CD8-positive, alpha-beta memory T cell (primary cell): ENCODE measurements at regions of chr2 and their contacts with region 1.

Region 1: DNA sequence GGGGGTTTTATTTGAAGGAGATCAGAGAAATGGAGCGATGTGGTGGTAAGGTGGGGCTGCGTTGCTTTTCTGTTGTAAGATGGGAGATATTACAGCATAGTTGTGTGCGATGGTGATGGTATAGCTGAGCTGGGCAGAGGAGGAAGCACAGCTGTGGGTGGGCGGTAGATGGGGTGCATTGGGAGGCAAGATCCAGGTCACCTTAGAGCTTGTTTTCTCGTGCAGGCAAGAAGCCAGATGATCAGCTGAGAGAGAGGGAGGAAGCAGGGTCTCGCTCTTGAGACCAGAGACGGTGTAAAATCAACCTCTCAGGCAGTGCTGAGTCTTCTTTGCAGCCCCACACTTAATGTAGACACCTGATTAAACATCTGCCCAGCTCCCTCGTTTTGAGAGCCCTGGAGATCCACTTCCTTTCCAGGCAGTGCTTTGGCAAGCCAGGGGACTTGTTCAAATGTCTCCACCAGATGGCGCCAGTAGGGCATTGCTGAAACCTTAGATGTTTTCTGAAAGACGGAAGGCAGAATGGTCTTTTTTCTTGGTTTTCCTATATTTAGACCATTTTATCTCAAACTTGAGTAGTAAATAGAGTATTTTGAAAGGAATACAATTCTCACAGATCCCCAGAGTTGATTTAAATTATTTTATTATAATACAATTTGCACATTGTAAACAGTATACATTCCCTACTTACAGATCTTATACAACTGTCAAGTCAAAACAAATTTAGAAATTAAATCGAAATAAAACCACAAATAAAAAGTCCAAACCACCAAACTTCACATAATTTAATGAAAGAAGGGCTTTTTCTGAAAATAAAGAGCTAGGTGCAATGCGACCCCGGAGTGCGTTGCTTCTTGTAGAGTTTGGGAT is 21.1 kb upstream of the LYPD6B start:
- DNase-seq: peak; percentile 45 to 74 (median 59)
- H3K4me3 ChIP-seq: no peak overlapping the region
- H3K4me3 Mint-ChIP-seq: no peak overlapping the region
- H3K27ac ChIP-seq: no peak overlapping the region
- H3K27ac Mint-ChIP-seq: peak overlapping the region in 3 of 8 donors; percentile 35 to 52 (median 50)
- H3K4me1 ChIP-seq: no peaks in the 10 kb centered on the region
- H3K4me1 Mint-ChIP-seq: peaks cover 7 to 11% (median 8%) of the 10 kb centered on the region in 3 donors
- H3K27me3 ChIP-seq: no peaks in the 10 kb centered on the region
- H3K27me3 Mint-ChIP-seq: no peaks in the 10 kb centered on the region

Region 2: GRCh38 chr2:149006883-149007540 is 10.3 kb before region 1 on chr2:
- CTCF ChIA-PET with region 1: interaction called, 20 read pairs
- POLR2A ChIA-PET with region 1: no interaction called
- DNase-seq: no peak
- H3K4me3 ChIP-seq: no peak overlapping the region
- H3K4me3 Mint-ChIP-seq: no peak overlapping the region
- H3K27ac ChIP-seq: no peak overlapping the region
- H3K27ac Mint-ChIP-seq: no peak overlapping the region
- H3K4me1 ChIP-seq: no peaks in the 10 kb centered on the region
- H3K4me1 Mint-ChIP-seq: no peaks in the 10 kb centered on the region
- H3K27me3 ChIP-seq: no peaks in the 10 kb centered on the region
- H3K27me3 Mint-ChIP-seq: no peaks in the 10 kb centered on the region

Region 3: DNA sequence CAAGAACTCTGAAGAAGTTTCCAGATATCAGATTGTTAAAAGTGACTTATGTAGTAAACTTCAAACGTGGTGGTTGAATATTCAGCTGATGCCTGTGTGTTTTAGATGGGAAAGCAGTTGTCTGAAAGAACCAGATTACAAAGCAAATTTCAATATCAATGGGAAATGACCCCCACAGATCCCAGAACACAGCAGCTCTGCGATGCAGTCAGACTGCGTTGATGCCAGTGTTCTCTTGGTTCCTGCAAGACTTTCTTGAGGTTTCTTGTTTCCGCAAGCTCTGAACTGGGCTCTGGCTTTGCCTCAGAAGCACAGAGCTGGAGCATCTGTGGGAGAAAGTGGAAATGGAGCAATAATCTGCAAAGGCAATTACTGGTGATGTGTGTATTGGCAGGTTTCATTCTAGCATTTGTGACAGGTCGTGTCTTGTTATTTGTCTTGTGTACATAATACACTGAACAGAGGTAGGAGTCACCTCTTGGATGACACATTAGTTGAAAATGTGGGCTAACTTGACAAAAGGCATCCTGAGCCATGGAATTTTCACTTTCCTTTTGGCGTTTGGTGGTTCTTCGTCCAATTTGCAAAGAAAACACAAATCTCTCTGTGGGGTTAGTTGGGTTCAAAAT is 10.4 kb after region 1 on chr2:
- CTCF ChIA-PET with region 1: interaction called, 20 read pairs
- POLR2A ChIA-PET with region 1: no interaction called
- DNase-seq: no peak
- H3K4me3 ChIP-seq: no peak overlapping the region
- H3K4me3 Mint-ChIP-seq: no peak overlapping the region
- H3K27ac ChIP-seq: no peak overlapping the region
- H3K27ac Mint-ChIP-seq: no peak overlapping the region
- H3K4me1 ChIP-seq: no peaks in the 10 kb centered on the region
- H3K4me1 Mint-ChIP-seq: peaks cover 0 to 4% (median 0%) of the 10 kb centered on the region in 3 donors
- H3K27me3 ChIP-seq: no peaks in the 10 kb centered on the region
- H3K27me3 Mint-ChIP-seq: peaks cover 6 to 7% of the 10 kb centered on the region in 2 donors

Region 4: DNA sequence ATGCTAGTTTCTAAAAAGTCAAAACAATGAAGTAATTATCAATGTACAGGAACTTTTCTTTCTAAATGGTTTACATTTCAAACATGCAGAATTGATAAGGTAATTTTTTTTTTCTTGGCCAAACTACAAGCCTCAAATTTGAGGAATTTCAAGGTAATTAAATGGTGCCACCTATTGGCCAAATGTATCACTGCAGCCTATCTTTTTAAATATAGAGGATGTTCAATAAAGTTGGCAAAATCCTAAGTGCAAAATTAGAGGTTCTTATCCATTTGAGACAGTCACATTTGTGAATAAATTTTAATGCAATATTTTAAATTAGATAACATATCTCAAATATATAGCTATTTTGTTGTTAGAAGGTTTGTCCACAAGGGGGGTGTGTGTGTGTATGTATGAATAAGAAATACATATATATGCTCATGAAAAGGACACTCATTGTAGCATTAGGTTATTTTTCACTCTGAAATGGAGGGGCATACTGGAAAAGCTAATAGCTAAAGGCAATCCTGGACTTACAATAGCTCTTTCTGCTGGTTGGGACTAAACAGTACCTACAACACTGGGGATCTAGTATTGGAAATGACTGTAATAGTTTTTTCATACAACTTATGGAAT is 544.1 kb after region 1 on chr2:
- CTCF ChIA-PET with region 1: interaction called, 21 read pairs
- POLR2A ChIA-PET with region 1: no interaction called
- DNase-seq: peak in 3 of 5 donors; percentile 6 to 36 (median 12)
- H3K4me3 ChIP-seq: no peak overlapping the region
- H3K4me3 Mint-ChIP-seq: no peak overlapping the region
- H3K27ac ChIP-seq: no peak overlapping the region
- H3K27ac Mint-ChIP-seq: no peak overlapping the region
- H3K4me1 ChIP-seq: no peaks in the 10 kb centered on the region
- H3K4me1 Mint-ChIP-seq: peaks cover 0 to 7% (median 1%) of the 10 kb centered on the region in 3 donors
- H3K27me3 ChIP-seq: no peaks in the 10 kb centered on the region
- H3K27me3 Mint-ChIP-seq: peaks cover 6 to 12% of the 10 kb centered on the region in 2 donors